Heart right ventricle (tissue), 16 donors: ENCODE measurements at regions of chr2 and their contacts with region 1.

Region 1: DNA sequence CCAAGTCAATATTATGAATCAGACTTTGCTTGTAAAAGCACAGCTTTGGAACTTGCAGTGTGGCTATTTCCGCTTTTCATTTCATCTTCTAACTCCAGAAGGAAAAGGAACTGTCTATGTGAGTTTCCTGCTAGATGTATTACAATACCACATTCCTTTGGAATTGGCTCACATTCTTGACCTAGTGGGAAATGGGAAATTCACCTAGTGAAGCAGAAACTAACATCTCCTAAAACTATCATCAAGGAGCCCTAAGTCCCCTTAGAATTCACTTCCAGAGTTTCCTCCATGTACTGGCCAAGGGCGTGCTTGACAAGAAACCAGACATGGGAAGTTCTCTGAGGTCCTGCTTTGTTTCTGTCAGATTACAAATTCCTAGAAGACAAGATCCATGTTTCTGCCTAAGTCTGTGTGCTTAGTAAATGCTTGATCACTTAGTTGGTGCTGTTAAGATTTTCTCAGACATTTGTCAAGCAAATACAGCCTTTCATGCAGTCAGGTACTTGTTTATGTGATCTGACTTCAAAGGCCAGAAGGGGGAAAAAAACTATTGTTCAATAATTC is 275.7 kb upstream of the FN1 start:
- DNase-seq: peak in 1 of 2 donors; percentile 14
- ATAC-seq: peak; percentile 13 to 89 (median 80)
- H3K4me3 ChIP-seq: no peak overlapping the region
- H3K27ac ChIP-seq: peak overlapping the region in 7 of 10 donors; percentile 1 to 73 (median 45)
- H3K4me1 ChIP-seq: peaks cover 2 to 37% (median 29%) of the 10 kb centered on the region in 9 donors
- H3K27me3 ChIP-seq: no peaks in the 10 kb centered on the region
- CTCF ChIP-seq: no peak

Region 2: DNA sequence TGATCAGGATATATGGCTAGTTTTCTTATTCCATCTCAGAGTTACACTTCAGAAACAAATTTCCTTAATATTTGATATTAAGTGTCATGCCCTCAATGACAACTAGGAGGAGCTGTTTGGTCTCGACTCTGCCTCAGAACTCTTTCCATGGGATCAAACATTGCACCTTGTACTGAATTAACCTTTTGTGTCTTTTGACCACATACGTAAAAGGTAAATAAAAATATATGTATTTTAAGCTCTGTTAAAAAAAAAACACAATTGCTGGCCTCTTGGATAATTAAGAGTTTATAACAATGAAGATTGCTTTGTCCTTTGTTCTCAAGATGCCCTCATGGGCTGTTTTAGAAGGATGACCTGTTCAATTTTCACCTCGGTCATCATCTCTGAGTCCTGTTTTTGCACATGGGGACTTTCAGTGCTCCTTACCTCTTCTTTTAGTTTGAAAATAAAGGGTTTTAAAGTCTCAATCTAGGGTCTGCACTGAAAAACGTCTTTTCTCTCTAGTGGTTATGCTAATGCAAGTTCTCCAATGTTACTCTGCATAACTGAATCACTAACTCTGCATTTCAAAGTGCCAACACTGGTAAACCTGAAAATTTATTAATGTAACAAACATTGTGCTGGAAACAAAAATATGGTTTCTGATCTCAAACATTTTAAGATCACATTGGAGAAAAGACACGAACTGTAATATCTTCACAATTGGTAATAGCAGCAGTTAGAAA is 256.9 kb before region 1 on chr2:
- intact Hi-C with region 1: loop called in 1 of 10 experiments (anchors 10 kb)
- DNase-seq: no peak
- ATAC-seq: no peak
- H3K4me3 ChIP-seq: no peak overlapping the region
- H3K27ac ChIP-seq: no peak overlapping the region
- H3K4me1 ChIP-seq: no peaks in the 10 kb centered on the region
- H3K27me3 ChIP-seq: peaks cover 0 to 5% (median 0%) of the 10 kb centered on the region in 7 donors
- CTCF ChIP-seq: peak; percentile 50 to 87 (median 76)

Region 3: GRCh38 chr2:215460682-215461382 is 250.7 kb before region 1 on chr2:
- intact Hi-C with region 1: loop called in 2 of 10 experiments (anchors 10 kb)
- DNase-seq: no peak
- ATAC-seq: peak in 5 of 8 donors; percentile 61 to 91 (median 66)
- H3K4me3 ChIP-seq: no peak overlapping the region
- H3K27ac ChIP-seq: peak overlapping the region in 5 of 10 donors; percentile 4 to 40 (median 14)
- H3K4me1 ChIP-seq: peaks cover 0 to 15% (median 0%) of the 10 kb centered on the region in 9 donors
- H3K27me3 ChIP-seq: no peaks in the 10 kb centered on the region
- CTCF ChIP-seq: no peak

Region 4: DNA sequence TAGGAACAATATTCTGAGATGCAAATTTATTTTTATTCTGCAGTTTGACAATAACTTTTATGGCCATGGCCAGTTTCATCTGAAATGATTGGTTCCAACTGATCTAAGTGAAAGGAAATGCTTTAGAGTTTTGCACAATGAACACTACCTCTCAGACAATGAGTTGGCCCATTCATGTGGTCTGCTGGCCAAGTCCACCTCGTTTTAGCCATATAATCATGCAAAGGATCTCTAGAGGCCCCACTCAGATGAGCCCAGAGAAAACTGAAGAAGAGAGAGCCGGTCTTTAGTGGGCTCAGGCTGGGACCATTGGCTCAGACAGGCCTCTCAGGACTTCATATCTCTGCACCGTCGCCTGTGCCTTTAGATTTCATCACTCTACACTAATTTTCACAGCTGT is 47.1 kb after region 1 on chr2:
- intact Hi-C with region 1: loop called in 1 of 10 experiments (anchors 5 kb)
- DNase-seq: peak in 1 of 2 donors; percentile 36
- ATAC-seq: peak in 7 of 8 donors; percentile 71 to 90 (median 83)
- H3K4me3 ChIP-seq: no peak overlapping the region
- H3K27ac ChIP-seq: peak overlapping the region in 8 of 10 donors; percentile 8 to 73 (median 27)
- H3K4me1 ChIP-seq: peaks cover 0 to 48% (median 11%) of the 10 kb centered on the region in 9 donors
- H3K27me3 ChIP-seq: no peaks in the 10 kb centered on the region
- CTCF ChIP-seq: no peak